ENCODE measurements at regions of chr12 and their contacts with region 1.

Region 1: DNA sequence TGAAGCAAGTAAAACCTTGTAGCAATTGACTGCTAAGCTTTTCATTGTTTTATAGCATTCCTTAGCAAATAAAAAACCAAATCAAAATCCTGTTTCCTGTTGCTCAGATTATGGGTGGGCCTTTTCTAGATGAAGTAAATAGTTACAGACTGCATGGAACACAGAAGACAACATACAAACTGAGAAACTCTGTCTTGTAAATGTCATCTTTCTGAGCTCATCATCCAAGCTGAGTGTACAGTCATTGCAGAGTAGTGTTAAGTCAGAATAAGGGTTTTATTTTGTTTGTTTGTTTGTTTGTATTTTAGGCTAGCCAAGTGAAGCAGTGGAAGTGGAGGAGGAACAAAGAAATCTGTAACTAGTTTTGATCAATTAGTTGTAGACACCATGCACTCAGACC is 24.4 kb upstream of the BTG1 start:
- DNase-seq: no peak
- ATAC-seq: no peak
- H3K4me3 ChIP-seq: no peak overlapping the region
- H3K4me3 Mint-ChIP-seq: no peak overlapping the region
- H3K27ac ChIP-seq: no peak overlapping the region
- H3K27ac Mint-ChIP-seq: peak overlapping the region in 3 of 9 donors; percentile 1 to 65 (median 5)
- H3K4me1 ChIP-seq: peaks cover 0 to 16% of the 10 kb centered on the region in 2 donors
- H3K4me1 Mint-ChIP-seq: peaks cover 8 to 47% (median 41%) of the 10 kb centered on the region in 7 donors
- H3K27me3 ChIP-seq: no peaks in the 10 kb centered on the region
- H3K27me3 Mint-ChIP-seq: no peaks in the 10 kb centered on the region

Region 2: DNA sequence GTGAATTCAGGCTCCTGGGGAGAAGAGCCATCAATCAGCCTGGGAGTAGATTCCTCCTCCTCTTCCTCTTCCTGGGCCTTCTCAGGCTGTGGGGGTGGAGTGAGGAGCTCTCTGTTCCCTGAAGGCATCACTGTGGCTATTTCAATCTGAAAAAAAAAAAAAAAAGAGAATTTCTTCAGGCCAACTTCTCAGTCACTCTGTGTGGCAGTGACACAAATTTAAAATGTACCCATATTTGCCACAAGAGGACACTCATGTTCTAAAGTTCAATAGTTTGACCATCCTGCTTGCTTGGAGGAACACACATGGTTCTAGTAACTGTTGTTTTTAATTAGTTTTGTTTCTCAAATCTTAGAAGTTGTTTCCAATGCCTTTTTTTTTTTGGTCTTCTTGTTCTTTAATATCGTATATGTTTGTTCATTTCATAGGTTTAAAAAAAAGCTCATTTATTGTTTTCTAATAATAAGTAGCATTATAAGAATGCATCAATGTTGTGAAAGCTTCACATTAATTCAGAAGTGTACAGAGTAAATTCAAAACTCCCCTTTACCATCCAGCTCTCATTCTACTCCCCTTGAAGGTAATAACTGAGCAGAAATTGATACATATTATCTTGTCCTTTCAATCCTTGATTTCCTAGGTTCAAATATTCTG is 1191.8 kb before region 1 on chr12:
- CTCF ChIA-PET with region 1: no interaction called
- POLR2A ChIA-PET with region 1: no interaction called
- intact Hi-C with region 1: no loop called
- DNase-seq: peak in 1 of 9 donors; percentile 7
- ATAC-seq: peak; percentile 59
- H3K4me3 ChIP-seq: no peak overlapping the region
- H3K4me3 Mint-ChIP-seq: no peak overlapping the region
- H3K27ac ChIP-seq: no peak overlapping the region
- H3K27ac Mint-ChIP-seq: no peak overlapping the region
- H3K4me1 ChIP-seq: no peaks in the 10 kb centered on the region
- H3K4me1 Mint-ChIP-seq: no peaks in the 10 kb centered on the region
- H3K27me3 ChIP-seq: no peaks in the 10 kb centered on the region
- H3K27me3 Mint-ChIP-seq: peaks cover 0 to 19% (median 0%) of the 10 kb centered on the region in 5 donors

Region 3: DNA sequence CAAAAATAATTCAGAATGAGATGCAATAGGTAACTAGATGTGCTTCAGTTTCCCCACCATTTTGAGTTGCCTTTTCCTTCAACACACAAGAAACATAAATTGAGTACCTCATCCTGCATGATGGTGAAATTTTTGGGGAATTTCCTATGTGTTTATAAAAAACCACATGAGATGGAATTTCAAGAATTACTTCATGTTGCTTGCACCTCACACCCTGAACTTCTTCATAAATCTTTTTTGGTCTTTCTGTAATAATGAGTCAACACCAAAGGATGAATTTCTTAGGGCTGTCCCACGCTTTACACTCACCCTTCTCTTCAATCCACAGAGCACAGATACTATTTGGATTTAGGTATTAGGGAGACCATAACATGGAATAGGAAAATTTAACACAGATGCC is 1036.2 kb before region 1 on chr12:
- CTCF ChIA-PET with region 1: no interaction called
- POLR2A ChIA-PET with region 1: no interaction called
- intact Hi-C with region 1: loop called in 1 of 2 experiments (anchors 5 kb)
- DNase-seq: no peak
- ATAC-seq: no peak
- H3K4me3 ChIP-seq: no peak overlapping the region
- H3K4me3 Mint-ChIP-seq: no peak overlapping the region
- H3K27ac ChIP-seq: no peak overlapping the region
- H3K27ac Mint-ChIP-seq: no peak overlapping the region
- H3K4me1 ChIP-seq: no peaks in the 10 kb centered on the region
- H3K4me1 Mint-ChIP-seq: no peaks in the 10 kb centered on the region
- H3K27me3 ChIP-seq: no peaks in the 10 kb centered on the region
- H3K27me3 Mint-ChIP-seq: peaks cover 0 to 15% (median 7%) of the 10 kb centered on the region in 5 donors

Region 4: DNA sequence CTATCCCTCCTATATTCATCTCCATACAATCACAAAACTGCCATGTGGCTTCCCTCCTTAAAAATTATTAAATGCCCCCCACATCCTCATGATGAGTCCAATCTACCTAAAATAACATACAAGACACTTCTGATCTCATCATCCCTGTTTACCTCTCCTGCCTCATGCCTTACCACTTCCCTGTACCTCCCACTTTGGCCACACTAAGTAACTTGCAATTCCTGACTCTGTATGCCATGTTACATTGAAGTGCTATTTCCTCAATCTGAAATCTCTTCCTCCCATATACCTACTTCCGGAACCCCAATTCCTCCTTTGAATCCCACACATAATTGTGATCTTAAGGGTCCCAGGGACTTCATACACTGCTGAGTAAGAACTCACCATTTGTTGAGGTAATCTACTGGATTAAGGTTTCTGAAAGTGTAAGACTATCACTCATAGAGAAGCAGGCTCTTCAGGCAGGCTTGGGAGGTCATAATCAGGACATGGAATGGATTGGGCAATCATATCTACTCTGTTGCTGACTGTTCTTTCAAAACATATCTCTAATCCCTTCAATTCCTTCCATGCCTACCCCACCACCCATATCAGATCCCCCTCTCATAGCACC is 415.2 kb after region 1 on chr12:
- CTCF ChIA-PET with region 1: no interaction called
- POLR2A ChIA-PET with region 1: no interaction called
- intact Hi-C with region 1: no loop called
- DNase-seq: no peak
- ATAC-seq: no peak
- H3K4me3 ChIP-seq: no peak overlapping the region
- H3K4me3 Mint-ChIP-seq: no peak overlapping the region
- H3K27ac ChIP-seq: no peak overlapping the region
- H3K27ac Mint-ChIP-seq: peak overlapping the region in 3 of 9 donors; percentile 3 to 67 (median 36)
- H3K4me1 ChIP-seq: no peaks in the 10 kb centered on the region
- H3K4me1 Mint-ChIP-seq: peaks cover 0 to 17% (median 5%) of the 10 kb centered on the region in 7 donors
- H3K27me3 ChIP-seq: no peaks in the 10 kb centered on the region
- H3K27me3 Mint-ChIP-seq: no peaks in the 10 kb centered on the region